ENCODE measurements at regions of chr1 and their contacts with region 1.

Region 1: GRCh38 chr1:248873409-248873992 is 14.6 kb upstream of the ZNF692 start:
- DNase-seq: peak; percentile 87
- H3K4me3 Mint-ChIP-seq: peak overlapping the region; percentile 87
- H3K27ac Mint-ChIP-seq: peak overlapping the region; percentile 95
- H3K4me1 Mint-ChIP-seq: peaks cover 26% of the 10 kb centered on the region
- H3K27me3 Mint-ChIP-seq: peaks cover 16% of the 10 kb centered on the region

Region 2: DNA sequence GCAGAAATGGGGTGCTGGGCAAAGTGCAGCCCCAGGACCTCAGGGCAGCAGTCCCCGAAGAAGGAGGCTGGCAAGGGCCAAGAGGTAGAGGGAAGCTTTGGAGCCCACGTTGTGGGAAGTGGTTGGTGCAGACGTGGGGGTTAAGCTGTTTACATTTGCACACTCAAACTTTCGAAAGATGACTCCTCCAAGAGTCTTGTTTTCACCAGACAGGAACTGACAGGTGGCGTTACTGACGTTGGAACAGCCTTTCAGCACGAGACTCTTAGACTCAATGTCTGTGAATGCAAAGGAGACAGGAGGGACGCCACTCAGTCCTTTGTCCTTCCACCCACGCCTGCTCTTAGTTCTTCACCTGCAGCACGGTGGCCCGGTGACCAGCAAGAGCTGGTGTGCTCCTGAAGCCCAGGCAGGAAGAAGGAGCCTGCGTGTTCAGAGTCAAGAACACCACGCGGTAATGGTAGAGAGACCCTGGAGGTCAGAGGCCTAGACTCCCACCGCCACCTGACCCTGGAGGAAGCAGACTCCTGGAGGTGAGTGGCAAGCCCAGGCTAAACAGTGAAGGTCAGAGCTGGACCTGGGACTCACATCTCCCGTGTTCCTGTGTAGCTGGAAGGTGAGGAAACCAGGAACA is 133.8 kb before region 1 on chr1:
- intact Hi-C with region 1: no loop called
- DNase-seq: no peak
- H3K4me3 Mint-ChIP-seq: no peak overlapping the region
- H3K27ac Mint-ChIP-seq: no peak overlapping the region
- H3K4me1 Mint-ChIP-seq: no peaks in the 10 kb centered on the region
- H3K27me3 Mint-ChIP-seq: no peaks in the 10 kb centered on the region

Region 3: DNA sequence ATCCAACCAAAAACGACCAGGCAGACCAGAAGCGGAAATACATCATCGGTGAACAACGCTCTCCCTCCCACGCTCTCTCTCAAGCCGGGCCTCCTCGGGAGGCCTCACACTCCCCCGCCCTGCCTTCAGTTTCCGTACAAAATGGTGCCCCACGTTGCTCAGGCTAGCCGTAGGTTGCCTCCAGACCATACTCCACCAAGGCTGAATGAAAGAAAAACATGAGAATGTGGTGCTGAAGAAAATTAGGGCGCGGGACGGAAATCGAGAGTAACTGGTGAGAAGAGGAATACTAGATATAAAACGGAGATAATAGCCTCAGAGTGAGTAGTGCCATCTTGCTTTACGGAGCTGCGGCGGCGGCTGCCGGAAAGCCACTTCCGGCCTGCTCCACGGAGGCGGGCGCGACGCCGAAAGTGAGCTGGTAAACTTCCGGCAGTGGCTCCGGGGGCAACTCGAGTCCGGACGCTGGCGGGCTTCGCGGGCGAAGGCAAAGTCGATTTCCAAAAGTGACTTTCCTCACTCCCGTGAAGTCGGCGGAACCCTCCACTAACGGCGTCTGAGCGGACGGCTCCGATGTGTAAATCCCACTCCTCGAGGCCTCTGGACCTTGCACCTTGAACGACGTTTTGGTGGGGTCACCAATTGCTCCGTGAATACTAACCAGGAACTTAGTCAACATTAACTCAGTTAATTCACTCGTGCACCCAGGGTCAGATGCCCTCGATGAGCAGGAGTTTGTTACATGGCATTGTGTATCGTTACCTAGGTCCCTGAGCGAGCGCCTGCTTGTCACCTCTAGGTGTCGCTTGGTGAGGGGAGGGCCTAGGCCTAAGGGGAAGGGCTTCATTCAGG is 47.4 kb before region 1 on chr1 and contains the start of gene SH3BP5L:
- intact Hi-C with region 1: loop called (anchors 1 kb)
- DNase-seq: peak; percentile 84
- H3K4me3 Mint-ChIP-seq: peak within 1 kb of the TSS; percentile 91
- H3K27ac Mint-ChIP-seq: peak within 1 kb of the TSS; percentile 100
- H3K4me1 Mint-ChIP-seq: peaks cover 44% of the 10 kb centered on the region
- H3K27me3 Mint-ChIP-seq: peaks cover 2% of the 10 kb centered on the region
- total RNA-seq, gene SH3BP5L: 29.0 and 30.9 TPM in 2 replicates

Region 4: DNA sequence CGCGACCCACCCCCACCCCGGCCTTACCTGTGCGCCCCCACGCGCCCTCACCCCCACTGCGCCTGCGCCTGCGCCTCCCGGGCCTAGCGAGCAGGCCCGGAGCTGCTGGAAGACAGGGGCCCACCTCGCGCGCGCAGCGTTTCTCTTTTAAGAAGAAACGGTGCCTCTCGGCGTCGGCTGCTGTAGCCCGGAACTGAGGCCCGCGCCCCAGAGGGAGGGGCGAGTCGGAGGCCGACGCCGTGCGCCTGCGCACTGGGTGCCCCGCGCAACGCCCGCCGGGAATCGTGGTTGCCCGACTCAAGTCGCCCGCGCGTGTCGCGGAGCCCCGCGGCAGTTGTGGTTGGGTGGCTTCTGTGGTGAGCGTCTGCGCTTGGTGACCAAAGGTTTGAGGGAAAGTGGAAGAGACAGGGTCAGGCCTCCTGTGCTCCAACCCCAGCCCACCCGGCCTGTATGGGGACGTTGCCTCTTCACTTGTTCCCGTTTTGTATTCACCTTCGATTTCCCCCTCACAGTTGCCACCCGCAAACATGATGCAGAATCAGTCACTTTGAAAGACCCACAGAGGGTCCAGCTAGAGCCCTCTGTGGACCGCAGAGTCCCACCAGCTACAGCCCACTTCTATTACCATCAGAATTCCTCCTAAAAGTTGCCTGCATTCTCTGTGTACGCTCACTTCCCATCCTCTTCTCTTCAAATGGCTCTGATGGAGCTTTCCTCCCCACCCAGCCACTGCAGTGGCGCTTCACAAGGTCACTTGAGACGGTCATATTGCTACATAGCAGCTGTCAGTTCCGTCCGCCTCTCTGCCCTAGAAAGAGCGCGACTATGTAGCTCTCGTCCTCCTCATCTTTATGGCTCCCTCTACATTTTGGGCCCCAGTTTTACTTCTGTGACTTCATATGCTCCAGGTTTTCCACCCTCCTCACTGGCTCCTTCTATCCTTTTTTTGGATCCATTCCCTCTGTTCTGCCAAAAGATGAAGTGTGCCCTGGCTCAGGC is 14.3 kb before region 1 on chr1 and contains the start of gene ZNF692:
- intact Hi-C with region 1: loop called (anchors 1 kb)
- DNase-seq: peak; percentile 97
- H3K4me3 Mint-ChIP-seq: peak within 1 kb of the TSS; percentile 96
- H3K27ac Mint-ChIP-seq: peak within 1 kb of the TSS; percentile 97
- H3K4me1 Mint-ChIP-seq: peaks cover 37% of the 10 kb centered on the region
- H3K27me3 Mint-ChIP-seq: no peaks in the 10 kb centered on the region
- total RNA-seq, gene ZNF692: 89.6 and 91.0 TPM in 2 replicates